ENCODE measurements at regions of chr1 and their contacts with region 1.

Region 1: GRCh38 chr1:208238710-208239472 is 5.3 kb downstream of the PLXNA2 start:
- DNase-seq: peak; percentile 76
- H3K4me3 ChIP-seq: peak overlapping the region; percentile 14 to 96 (median 91)
- H3K27ac ChIP-seq: peak overlapping the region; percentile 97
- H3K4me1 ChIP-seq: peaks cover 74% of the 10 kb centered on the region
- H3K27me3 ChIP-seq: no peaks in the 10 kb centered on the region
- CTCF ChIP-seq: peak; percentile 78 to 87
- POLR2A ChIP-seq: no peak

Region 2: GRCh38 chr1:207935166-207935583 is 303.7 kb before region 1 on chr1:
- CTCF ChIA-PET with region 1: no interaction called
- POLR2A ChIA-PET with region 1: no interaction called
- dilution Hi-C with region 1: no loop called
- intact Hi-C with region 1: loop called (anchors 5 kb)
- DNase-seq: no peak
- H3K4me3 ChIP-seq: no peak overlapping the region
- H3K27ac ChIP-seq: no peak overlapping the region
- H3K4me1 ChIP-seq: peaks cover 26% of the 10 kb centered on the region
- H3K27me3 ChIP-seq: no peaks in the 10 kb centered on the region
- CTCF ChIP-seq: no peak
- POLR2A ChIP-seq: no peak

Region 3: GRCh38 chr1:208132287-208132883 is 106.5 kb before region 1 on chr1:
- CTCF ChIA-PET with region 1: interaction called, 316 read pairs
- POLR2A ChIA-PET with region 1: interaction called, 3 read pairs
- dilution Hi-C with region 1: loop called (anchors 25 kb)
- intact Hi-C with region 1: loop called (anchors 1 kb)
- DNase-seq: peak; percentile 64
- H3K4me3 ChIP-seq: no peak overlapping the region
- H3K27ac ChIP-seq: no peak overlapping the region
- H3K4me1 ChIP-seq: peaks cover 4% of the 10 kb centered on the region
- H3K27me3 ChIP-seq: no peaks in the 10 kb centered on the region
- CTCF ChIP-seq: peak; percentile 88 to 91
- POLR2A ChIP-seq: no peak

Region 4: DNA sequence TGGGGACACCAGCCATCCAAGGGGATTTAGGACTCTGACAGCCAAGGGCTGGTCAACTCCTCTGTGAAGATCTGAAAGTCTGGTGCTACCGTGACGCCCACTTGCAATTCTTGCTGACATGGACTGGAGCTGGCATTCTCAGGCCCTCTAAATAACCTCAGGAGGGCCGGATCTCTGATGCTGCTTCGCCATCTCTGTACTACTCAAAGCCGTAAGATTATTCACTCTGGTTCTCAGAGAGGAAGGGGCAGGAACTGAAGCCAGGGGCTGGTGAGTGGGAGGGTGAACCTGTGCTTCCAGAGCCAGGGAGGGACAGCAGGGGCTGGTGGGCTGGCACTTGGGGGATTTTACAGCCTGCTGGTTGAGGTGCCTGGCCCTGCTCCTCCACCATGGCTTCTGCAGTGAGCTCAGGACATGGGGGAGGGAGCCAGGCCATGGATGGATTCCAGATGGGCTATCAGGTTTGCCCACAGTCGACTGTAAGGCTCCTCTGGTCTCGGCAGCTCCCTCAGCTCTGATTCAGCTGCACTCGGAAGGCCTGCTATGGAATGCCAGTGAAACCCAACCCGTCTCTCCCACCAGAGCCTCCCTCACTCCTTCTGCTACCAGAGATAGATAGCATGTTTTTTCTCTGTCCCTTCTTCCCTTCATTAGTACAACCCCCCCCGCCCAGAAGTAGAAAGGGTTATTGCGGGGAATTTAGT is 79.2 kb before region 1 on chr1:
- CTCF ChIA-PET with region 1: interaction called, 52 read pairs
- POLR2A ChIA-PET with region 1: no interaction called
- dilution Hi-C with region 1: no loop called
- intact Hi-C with region 1: loop called (anchors 1 kb)
- DNase-seq: peak; percentile 41
- H3K4me3 ChIP-seq: no peak overlapping the region
- H3K27ac ChIP-seq: peak overlapping the region; percentile 27
- H3K4me1 ChIP-seq: peaks cover 54% of the 10 kb centered on the region
- H3K27me3 ChIP-seq: no peaks in the 10 kb centered on the region
- CTCF ChIP-seq: no peak
- POLR2A ChIP-seq: no peak

Region 5: DNA sequence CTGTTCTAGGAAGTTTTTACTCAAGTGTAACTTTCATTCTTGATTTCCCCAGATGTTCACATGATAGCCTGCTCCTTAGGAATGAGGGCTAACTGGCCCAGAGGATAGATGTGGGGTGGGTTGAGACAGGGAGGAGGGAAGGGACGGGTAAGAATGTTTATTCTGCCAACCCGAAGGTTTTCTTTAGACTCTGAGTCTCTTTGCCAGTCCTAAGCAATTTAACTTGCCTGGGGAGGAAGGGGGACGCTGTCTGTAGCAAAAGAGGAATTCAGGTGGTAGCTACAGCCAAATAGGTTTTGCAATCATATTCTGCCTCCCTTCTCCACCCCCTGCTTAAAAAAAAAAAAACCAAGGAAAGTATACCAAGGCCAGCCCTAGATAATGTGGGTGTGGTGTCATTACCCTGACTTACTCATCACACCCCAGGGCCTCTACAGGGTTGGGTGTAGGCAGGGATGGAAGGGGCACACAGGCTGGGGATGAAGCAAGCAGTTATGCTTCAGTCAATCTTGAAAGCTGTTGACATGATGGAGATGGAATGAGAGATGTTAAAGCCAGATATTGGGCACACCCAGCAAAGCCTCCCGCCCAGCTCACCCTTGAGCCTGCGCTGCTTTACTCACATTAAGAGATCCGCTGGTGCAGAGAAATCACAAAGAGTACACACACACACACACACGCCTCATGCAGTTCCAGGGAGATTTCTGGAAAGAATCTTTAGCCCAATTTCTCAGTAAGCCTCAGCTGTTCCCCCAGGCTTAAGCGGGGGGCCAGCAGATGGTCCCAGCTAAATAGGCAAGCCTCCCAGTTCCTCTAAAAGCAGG is 54.6 kb before region 1 on chr1:
- CTCF ChIA-PET with region 1: interaction called, 52 read pairs
- POLR2A ChIA-PET with region 1: no interaction called
- dilution Hi-C with region 1: loop called (anchors 5 kb)
- intact Hi-C with region 1: no loop called
- DNase-seq: no peak
- H3K4me3 ChIP-seq: no peak overlapping the region
- H3K27ac ChIP-seq: no peak overlapping the region
- H3K4me1 ChIP-seq: peaks cover 58% of the 10 kb centered on the region
- H3K27me3 ChIP-seq: no peaks in the 10 kb centered on the region
- CTCF ChIP-seq: no peak
- POLR2A ChIP-seq: no peak

Region 6: GRCh38 chr1:208207388-208208131 is 31.3 kb before region 1 on chr1:
- CTCF ChIA-PET with region 1: interaction called, 714 read pairs
- POLR2A ChIA-PET with region 1: interaction called, 17 read pairs
- dilution Hi-C with region 1: no loop called
- intact Hi-C with region 1: loop called (anchors 1 kb)
- DNase-seq: peak; percentile 97
- H3K4me3 ChIP-seq: no peak overlapping the region
- H3K27ac ChIP-seq: peak overlapping the region; percentile 94
- H3K4me1 ChIP-seq: peaks cover 94% of the 10 kb centered on the region
- H3K27me3 ChIP-seq: no peaks in the 10 kb centered on the region
- CTCF ChIP-seq: no peak
- POLR2A ChIP-seq: no peak

Measured in endothelial cell of umbilical vein (primary cell).